Naive thymus-derived CD4-positive, alpha-beta T cell (primary cell): ENCODE measurements at regions of chr10 and their contacts with region 1.

Region 1: DNA sequence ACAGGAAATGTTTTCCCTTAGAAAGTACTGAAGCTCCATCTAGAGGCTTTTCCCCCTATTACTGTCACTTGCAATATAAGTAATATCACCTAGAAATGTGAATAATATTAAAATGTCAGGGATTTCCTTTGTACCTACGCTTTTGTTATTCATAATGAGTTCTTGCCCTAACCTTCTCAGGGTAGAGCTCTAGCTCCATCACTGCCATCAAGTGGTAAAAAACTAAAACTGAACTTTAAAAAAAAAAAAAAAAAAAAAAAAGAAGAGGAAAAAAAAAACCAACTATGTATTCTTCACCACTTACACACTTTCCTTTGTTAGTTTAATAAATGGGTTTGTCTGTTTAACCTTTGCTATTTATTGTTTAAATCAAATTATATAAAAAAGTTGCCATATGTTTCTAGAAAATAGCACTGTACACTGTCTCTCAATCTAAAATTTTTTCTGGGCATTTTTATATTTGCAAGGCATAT is 49.9 kb downstream of the DNAJC1 start:
- DNase-seq: peak in 6 of 9 donors; percentile 10 to 48 (median 26)
- ATAC-seq: peak; percentile 68
- H3K4me3 ChIP-seq: no peak overlapping the region
- H3K4me3 Mint-ChIP-seq: no peak overlapping the region
- H3K27ac ChIP-seq: no peak overlapping the region
- H3K27ac Mint-ChIP-seq: no peak overlapping the region
- H3K4me1 ChIP-seq: no peaks in the 10 kb centered on the region
- H3K4me1 Mint-ChIP-seq: peaks cover 0 to 4% (median 0%) of the 10 kb centered on the region in 7 donors
- H3K27me3 ChIP-seq: no peaks in the 10 kb centered on the region
- H3K27me3 Mint-ChIP-seq: no peaks in the 10 kb centered on the region

Region 2: GRCh38 chr10:20858292-20859124 is 1095.1 kb before region 1 on chr10:
- CTCF ChIA-PET with region 1: no interaction called
- POLR2A ChIA-PET with region 1: no interaction called
- intact Hi-C with region 1: loop called in 1 of 2 experiments (anchors 2 kb)
- DNase-seq: no peak
- ATAC-seq: no peak
- H3K4me3 ChIP-seq: no peak overlapping the region
- H3K4me3 Mint-ChIP-seq: no peak overlapping the region
- H3K27ac ChIP-seq: no peak overlapping the region
- H3K27ac Mint-ChIP-seq: no peak overlapping the region
- H3K4me1 ChIP-seq: no peaks in the 10 kb centered on the region
- H3K4me1 Mint-ChIP-seq: no peaks in the 10 kb centered on the region
- H3K27me3 ChIP-seq: no peaks in the 10 kb centered on the region
- H3K27me3 Mint-ChIP-seq: peaks cover 0 to 9% (median 7%) of the 10 kb centered on the region in 5 donors

Region 3: DNA sequence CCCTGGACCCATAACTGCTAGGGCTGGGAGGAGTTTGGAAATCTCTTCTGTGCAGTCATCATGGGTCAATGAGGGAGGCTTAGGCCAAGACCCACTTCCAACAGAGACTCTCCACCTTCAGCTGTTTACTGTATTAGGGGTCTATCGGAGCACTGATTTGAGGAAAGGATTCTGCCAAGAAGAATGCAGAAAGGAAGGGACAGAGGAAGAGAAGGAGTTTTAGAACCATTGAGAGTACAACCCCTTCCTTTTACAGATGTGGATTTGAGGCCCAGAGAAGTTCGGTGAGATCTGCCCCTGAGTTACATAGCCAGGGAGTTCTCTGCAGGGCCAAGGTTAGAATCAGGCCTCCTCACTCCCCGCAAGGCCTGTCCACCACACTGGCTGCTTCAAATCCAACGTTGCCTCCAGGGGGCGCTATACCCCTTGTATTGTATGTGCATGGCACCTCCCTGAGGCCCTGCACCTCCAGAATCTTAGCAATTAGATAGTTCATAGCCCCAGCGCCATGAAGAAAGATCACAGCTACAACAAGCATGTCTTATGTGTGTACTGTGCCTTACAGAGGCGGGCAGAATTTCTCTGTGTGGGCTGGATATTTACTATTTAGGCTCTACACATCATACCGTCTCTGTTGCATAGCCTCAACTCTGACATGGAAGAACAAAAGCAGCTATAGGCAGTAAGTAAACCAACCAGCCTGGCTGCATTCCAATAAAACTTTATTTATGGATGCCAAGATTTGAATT is 675.0 kb before region 1 on chr10:
- CTCF ChIA-PET with region 1: no interaction called
- POLR2A ChIA-PET with region 1: no interaction called
- intact Hi-C with region 1: loop called (anchors 2 to 10 kb)
- DNase-seq: peak; percentile 21 to 66 (median 46)
- ATAC-seq: peak; percentile 70
- H3K4me3 ChIP-seq: no peak overlapping the region
- H3K4me3 Mint-ChIP-seq: no peak overlapping the region
- H3K27ac ChIP-seq: no peak overlapping the region
- H3K27ac Mint-ChIP-seq: no peak overlapping the region
- H3K4me1 ChIP-seq: no peaks in the 10 kb centered on the region
- H3K4me1 Mint-ChIP-seq: no peaks in the 10 kb centered on the region
- H3K27me3 ChIP-seq: no peaks in the 10 kb centered on the region
- H3K27me3 Mint-ChIP-seq: peaks cover 0 to 24% (median 4%) of the 10 kb centered on the region in 5 donors

Region 4: GRCh38 chr10:21724695-21725367 is 228.8 kb before region 1 on chr10:
- CTCF ChIA-PET with region 1: no interaction called
- POLR2A ChIA-PET with region 1: no interaction called
- intact Hi-C with region 1: loop called (anchors 5 to 10 kb)
- DNase-seq: peak in 4 of 9 donors; percentile 26 to 45 (median 33)
- ATAC-seq: peak; percentile 69
- H3K4me3 ChIP-seq: no peak overlapping the region
- H3K4me3 Mint-ChIP-seq: peak overlapping the region in 2 of 10 donors; percentile 29 to 46
- H3K27ac ChIP-seq: no peak overlapping the region
- H3K27ac Mint-ChIP-seq: peak overlapping the region in 6 of 9 donors; percentile 7 to 70 (median 54)
- H3K4me1 ChIP-seq: peaks cover 0 to 15% of the 10 kb centered on the region in 2 donors
- H3K4me1 Mint-ChIP-seq: peaks cover 17 to 49% (median 38%) of the 10 kb centered on the region in 7 donors
- H3K27me3 ChIP-seq: no peaks in the 10 kb centered on the region
- H3K27me3 Mint-ChIP-seq: no peaks in the 10 kb centered on the region

Region 5: DNA sequence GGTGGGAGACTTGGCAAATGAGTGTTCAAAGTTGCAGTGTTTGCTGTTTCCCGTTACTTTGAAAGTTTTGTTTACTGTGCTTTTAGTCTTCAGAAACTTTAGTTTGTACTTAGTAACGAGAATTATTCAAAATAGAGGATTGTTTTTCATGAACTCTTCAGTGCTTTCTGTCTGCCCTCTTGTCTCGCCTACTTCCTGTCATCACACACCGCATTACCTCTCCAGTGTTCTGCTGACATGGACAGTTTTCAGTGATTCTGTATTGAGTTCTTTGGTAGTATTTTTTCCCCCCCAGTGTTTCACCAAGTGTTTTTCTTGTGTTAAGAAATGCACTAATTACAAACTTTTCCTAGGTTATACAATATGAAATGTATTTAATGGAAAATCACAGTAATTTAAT is 212.6 kb before region 1 on chr10:
- CTCF ChIA-PET with region 1: no interaction called
- POLR2A ChIA-PET with region 1: no interaction called
- intact Hi-C with region 1: loop called in 1 of 2 experiments (anchors 1 kb)
- DNase-seq: peak in 7 of 9 donors; percentile 59 to 84 (median 78)
- ATAC-seq: peak; percentile 93
- H3K4me3 ChIP-seq: no peak overlapping the region
- H3K4me3 Mint-ChIP-seq: peak overlapping the region in 9 of 10 donors; percentile 12 to 73 (median 65)
- H3K27ac ChIP-seq: peak overlapping the region; percentile 70
- H3K27ac Mint-ChIP-seq: peak overlapping the region; percentile 76 to 98 (median 92)
- H3K4me1 ChIP-seq: peaks cover 14 to 55% of the 10 kb centered on the region in 2 donors
- H3K4me1 Mint-ChIP-seq: peaks cover 31 to 69% (median 60%) of the 10 kb centered on the region in 7 donors
- H3K27me3 ChIP-seq: no peaks in the 10 kb centered on the region
- H3K27me3 Mint-ChIP-seq: no peaks in the 10 kb centered on the region

Region 6: DNA sequence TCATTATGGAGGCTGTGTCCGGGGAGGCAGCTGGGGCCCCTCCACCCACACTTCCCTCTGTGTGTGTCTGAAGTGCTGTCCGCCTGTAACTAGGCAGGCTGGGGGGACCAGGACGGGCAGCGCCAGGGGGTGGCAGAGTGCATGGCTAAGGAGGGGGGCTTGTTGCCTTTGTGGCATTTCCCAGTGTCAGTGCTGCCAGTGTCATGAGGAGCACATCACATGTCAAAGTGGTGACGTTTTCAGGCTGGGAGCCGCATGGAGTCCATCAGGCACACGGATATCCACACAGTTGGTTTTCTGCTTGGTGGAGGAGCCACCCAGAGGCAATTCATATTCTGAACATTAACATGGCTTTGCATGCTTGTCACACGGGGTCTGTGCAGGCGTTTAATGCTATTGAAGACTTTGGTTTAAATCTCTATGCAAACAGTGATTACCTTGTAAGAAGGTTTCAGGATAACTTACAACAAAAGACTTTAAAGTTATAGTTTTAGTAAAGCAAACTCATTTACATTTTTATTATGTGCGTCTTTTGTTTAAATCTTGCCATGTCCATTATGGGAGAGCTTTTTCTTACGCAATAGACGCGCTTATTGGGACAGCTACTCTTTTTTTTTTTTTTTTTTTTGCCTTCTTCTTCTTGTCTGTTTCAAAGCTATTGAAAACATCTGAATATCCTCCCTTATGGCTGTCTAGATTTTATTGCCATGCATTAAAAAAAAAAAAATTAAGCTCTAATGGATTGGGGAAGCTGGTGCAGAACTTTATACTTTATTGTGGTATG is 1338.1 kb after region 1 on chr10:
- CTCF ChIA-PET with region 1: no interaction called
- POLR2A ChIA-PET with region 1: no interaction called
- intact Hi-C with region 1: no loop called
- DNase-seq: no peak
- ATAC-seq: no peak
- H3K4me3 ChIP-seq: no peak overlapping the region
- H3K4me3 Mint-ChIP-seq: no peak overlapping the region
- H3K27ac ChIP-seq: no peak overlapping the region
- H3K27ac Mint-ChIP-seq: no peak overlapping the region
- H3K4me1 ChIP-seq: no peaks in the 10 kb centered on the region
- H3K4me1 Mint-ChIP-seq: peaks cover 0 to 2% (median 0%) of the 10 kb centered on the region in 7 donors
- H3K27me3 ChIP-seq: peaks cover 0 to 6% of the 10 kb centered on the region in 2 donors
- H3K27me3 Mint-ChIP-seq: peaks cover 11 to 32% (median 20%) of the 10 kb centered on the region in 5 donors